ENCODE measurements at regions of chr2 and their contacts with region 1.

Region 1: DNA sequence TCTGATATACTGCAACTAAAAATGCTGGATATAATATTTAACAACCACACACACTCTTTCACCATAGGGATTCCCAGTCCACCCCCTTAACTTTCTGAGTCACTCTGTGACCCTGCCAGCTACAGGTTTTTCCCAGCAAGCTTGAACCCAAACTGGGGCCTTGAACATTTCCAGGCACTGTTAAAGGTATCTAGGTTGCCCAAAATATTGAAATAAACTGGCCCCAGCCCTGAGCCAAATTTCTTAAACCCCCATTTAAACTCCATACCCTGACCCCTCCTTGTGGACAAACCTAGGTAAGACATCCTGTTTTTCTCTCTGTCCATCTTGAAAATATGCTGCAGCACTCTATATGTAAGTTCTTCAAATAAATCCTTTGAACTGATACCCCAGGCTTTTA is 19.7 kb upstream of the DCTN1 start:
- DNase-seq: peak; percentile 27
- H3K4me3 ChIP-seq: no peak overlapping the region
- H3K27ac ChIP-seq: no peak overlapping the region
- H3K4me1 ChIP-seq: no peaks in the 10 kb centered on the region
- H3K27me3 ChIP-seq: no peaks in the 10 kb centered on the region
- CTCF ChIP-seq: peak; percentile 47 to 67

Region 2: DNA sequence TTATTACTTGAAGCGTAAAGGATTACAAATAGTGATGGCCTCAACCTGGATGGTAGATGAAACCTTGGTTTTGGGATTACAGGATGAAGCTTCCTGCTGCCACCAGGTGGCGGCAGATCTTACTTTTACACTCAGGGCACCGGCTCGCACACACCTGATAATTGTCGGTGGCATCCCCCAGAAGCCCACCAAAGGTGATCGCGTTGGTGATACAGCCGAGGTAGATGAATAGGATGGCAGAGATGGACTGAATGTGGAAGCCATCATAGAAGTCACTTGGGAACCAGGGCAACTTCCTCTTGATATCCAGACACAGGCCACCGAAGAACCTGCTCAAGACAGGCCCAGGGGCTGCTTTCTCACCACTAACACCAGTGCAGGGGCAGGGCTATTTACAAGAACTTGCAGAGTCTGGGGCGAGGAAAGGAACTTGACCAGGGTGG is 149.6 kb before region 1 on chr2:
- CTCF ChIA-PET with region 1: no interaction called
- dilution Hi-C with region 1: no loop called
- in situ Hi-C with region 1: no loop called
- intact Hi-C with region 1: loop called (anchors 1 kb)
- DNase-seq: peak; percentile 9
- H3K4me3 ChIP-seq: no peak overlapping the region
- H3K27ac ChIP-seq: no peak overlapping the region
- H3K4me1 ChIP-seq: no peaks in the 10 kb centered on the region
- H3K27me3 ChIP-seq: no peaks in the 10 kb centered on the region
- CTCF ChIP-seq: peak; percentile 71 to 80

Region 3: DNA sequence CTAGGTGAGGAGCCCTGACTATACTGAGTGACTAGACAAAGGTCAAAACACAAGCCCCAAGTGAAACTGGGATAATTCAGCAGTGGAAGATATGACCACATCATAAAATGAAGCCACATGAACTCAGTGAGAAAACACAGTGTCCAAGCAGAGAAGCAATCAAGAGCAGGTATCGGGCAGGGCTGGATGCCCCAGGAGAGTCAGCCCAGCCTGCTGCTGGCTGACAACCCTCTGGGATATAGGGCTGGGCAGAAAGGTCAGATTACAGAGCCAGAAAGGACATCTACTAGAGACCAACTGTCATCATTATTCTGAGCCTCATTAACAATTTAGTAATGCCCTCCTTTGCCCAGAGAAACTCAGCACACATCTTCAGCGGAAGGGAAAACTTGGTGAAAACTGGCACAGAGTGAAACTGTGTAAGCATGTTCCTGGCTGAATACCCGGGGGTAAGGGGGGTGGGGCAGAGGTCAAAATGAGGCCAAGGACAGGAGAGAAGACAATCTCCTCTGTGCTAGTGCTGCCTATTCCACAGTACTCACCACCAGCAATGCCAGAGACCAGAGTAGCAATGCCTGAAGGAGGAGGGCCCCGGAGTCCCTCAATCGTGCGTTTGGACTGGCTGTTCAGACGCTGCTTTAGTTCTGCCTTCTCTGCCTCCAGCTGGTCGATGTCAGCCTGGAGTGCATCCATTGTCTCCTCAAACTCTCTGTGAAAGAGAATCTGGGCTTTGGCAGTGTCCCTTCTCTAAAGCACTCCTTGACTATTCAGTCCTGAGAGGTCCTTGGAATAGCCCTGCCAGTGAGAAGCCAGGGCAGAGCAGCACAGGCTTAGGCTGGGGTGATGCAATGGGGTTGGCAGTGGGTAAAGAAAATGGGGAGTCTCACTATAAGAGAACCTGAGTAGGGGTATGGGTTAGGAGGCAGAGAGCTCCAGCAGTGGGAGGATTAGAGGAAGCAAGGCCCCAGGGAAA is 35.0 kb before region 1 on chr2:
- CTCF ChIA-PET with region 1: no interaction called
- dilution Hi-C with region 1: loop called (anchors 5 kb)
- in situ Hi-C with region 1: no loop called
- intact Hi-C with region 1: no loop called
- DNase-seq: no peak
- H3K4me3 ChIP-seq: no peak overlapping the region
- H3K27ac ChIP-seq: no peak overlapping the region
- H3K4me1 ChIP-seq: no peaks in the 10 kb centered on the region
- H3K27me3 ChIP-seq: no peaks in the 10 kb centered on the region
- CTCF ChIP-seq: no peak

Region 4: GRCh38 chr2:74436798-74437695 is 37.3 kb after region 1 on chr2:
- CTCF ChIA-PET with region 1: no interaction called
- dilution Hi-C with region 1: no loop called
- in situ Hi-C with region 1: no loop called
- intact Hi-C with region 1: no loop called
- DNase-seq: no peak
- H3K4me3 ChIP-seq: no peak overlapping the region
- H3K27ac ChIP-seq: no peak overlapping the region
- H3K4me1 ChIP-seq: peaks cover 31% of the 10 kb centered on the region
- H3K27me3 ChIP-seq: no peaks in the 10 kb centered on the region
- CTCF ChIP-seq: no peak

Region 5: DNA sequence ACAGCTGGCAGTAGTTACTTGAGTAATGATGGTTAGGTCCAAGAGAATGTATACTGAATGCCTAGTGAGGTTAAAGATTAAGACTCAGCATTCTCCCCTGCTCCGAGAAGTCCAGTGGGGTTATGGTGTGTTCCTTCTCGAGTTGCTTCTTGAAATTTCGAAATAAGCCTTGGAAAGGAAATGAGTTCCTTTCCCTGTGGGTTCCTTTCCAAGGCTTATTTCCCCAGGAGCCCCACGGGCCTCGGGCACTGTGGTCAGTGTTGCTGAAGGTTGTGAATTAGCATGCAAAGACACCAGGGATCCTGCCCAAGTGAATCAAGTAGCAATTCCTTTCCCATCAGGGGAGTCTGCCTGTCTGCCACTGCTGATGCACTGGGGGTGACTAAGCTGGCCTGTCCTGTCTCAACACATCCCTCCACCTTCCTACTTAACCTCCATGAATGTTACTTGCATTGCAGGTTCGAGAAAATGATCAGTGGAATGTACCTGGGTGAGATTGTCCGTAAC is 487.7 kb after region 1 on chr2:
- CTCF ChIA-PET with region 1: no interaction called
- dilution Hi-C with region 1: no loop called
- in situ Hi-C with region 1: no loop called
- intact Hi-C with region 1: no loop called
- DNase-seq: peak; percentile 93
- H3K4me3 ChIP-seq: peak overlapping the region in 1 of 3 experiments; percentile 3
- H3K27ac ChIP-seq: peak overlapping the region; percentile 69
- H3K4me1 ChIP-seq: peaks cover 39% of the 10 kb centered on the region
- H3K27me3 ChIP-seq: no peaks in the 10 kb centered on the region
- CTCF ChIP-seq: no peak